Activated CD4-positive, alpha-beta memory T cell treated with anti-CD3 and anti-CD28 coated beads for 36 hours (primary cell): ENCODE measurements at regions of chr11 and their contacts with region 1.

Region 1: DNA sequence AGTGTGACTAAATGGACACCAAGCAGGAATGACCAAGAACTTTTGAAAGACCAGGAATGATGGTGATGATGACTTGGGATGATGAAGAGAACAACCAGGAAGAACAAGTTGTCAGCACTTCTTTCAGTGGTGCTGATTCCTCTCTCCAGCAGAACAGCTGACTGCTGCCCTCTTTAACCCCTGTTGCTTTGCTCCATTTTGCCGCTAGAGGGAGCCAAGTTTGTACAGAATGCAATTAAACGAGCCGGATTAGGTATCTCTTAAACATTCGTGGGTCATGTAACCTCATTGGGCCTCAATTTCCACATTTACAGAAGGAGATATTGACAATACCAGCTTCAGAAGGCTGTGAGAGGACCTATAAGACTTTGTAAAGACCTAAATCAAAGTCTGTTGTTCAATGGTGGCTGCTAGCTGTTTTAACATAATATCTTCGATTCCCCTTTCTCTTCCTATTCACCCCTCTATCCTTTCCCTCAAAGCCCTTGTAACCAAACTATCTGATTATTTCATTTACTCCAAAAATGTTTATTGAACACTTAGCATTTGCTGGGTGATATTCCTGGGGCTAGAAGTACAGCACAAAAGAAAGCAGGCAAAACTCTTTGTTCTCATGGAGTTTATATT is 1.9 kb downstream of the OR4S1 start:
- DNase-seq: peak; percentile 78
- H3K4me3 Mint-ChIP-seq: no peak overlapping the region
- H3K27ac Mint-ChIP-seq: no peak overlapping the region
- H3K4me1 Mint-ChIP-seq: no peaks in the 10 kb centered on the region
- H3K27me3 Mint-ChIP-seq: peaks cover 2% of the 10 kb centered on the region

Region 2: GRCh38 chr11:49533204-49533603 is 1225.3 kb after region 1 on chr11:
- CTCF ChIA-PET with region 1: interaction called, 3 read pairs
- POLR2A ChIA-PET with region 1: no interaction called
- intact Hi-C with region 1: loop called (anchors 5 kb)
- DNase-seq: no peak
- H3K4me3 Mint-ChIP-seq: no peak overlapping the region
- H3K27ac Mint-ChIP-seq: no peak overlapping the region
- H3K4me1 Mint-ChIP-seq: no peaks in the 10 kb centered on the region
- H3K27me3 Mint-ChIP-seq: no peaks in the 10 kb centered on the region